Activated CD8-positive, alpha-beta memory T cell treated with anti-CD3 and anti-CD28 coated beads, Interleukin-2, amount 10 ng/mL, durations not matched to agents 7 days and 5 days (primary cell): ENCODE measurements at regions of chr3 and their contacts with region 1.

Region 1: DNA sequence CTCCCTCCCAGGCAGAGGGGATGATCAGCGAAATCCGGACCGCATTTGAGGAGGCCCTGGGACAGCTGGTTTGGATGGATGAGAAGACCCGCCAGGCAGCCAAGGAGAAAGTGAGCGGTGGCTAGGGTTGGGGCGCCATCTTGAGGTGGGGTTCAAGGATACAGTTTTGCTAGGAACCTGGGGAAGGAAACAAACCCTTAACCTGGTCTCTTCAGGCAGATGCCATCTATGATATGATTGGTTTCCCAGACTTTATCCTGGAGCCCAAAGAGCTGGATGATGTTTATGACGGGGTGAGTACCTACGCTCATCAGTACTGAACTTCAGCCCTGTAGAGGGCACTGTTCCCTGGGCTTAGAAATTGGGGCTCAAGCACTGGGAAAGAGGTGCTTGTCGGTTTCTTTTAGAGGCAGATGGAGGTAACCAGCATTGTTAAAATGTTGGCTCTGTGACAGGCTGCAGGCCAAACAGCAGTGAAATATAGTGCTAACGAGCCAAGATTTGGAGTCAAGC is 9.6 kb upstream of the PSMD2 start:
- DNase-seq: peak; percentile 76
- ATAC-seq: peak; percentile 80
- H3K4me3 Mint-ChIP-seq: no peak overlapping the region
- H3K27ac Mint-ChIP-seq: no peak overlapping the region
- H3K4me1 Mint-ChIP-seq: no peaks in the 10 kb centered on the region
- H3K27me3 Mint-ChIP-seq: peaks cover 14% of the 10 kb centered on the region

Region 2: DNA sequence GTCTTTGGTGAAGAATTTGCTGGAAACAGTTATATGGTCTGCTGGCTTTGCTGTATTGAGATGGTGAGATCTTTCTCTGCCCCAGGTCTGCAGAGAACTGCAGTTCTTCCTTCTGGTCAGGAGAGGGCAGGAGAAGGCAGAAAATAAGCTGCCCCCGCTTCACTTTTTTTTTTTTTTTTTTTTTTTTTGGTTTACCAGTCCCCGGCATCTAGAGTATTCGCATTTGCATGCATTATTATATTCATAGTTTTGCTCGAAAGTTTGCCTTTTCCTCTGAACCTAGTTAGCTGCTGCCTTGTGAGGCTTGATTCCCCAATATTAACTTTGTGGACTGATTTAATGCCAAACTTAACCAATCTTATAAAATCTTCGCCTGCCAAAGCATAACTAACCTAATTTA is 394.2 kb before region 1 on chr3:
- CTCF ChIA-PET with region 1: interaction called, 12 read pairs
- DNase-seq: peak; percentile 54
- ATAC-seq: peak; percentile 84
- H3K4me3 Mint-ChIP-seq: no peak overlapping the region
- H3K27ac Mint-ChIP-seq: no peak overlapping the region
- H3K4me1 Mint-ChIP-seq: peaks cover 3% of the 10 kb centered on the region
- H3K27me3 Mint-ChIP-seq: peaks cover 19% of the 10 kb centered on the region

Region 3: GRCh38 chr3:184040010-184040409 is 249.5 kb before region 1 on chr3:
- CTCF ChIA-PET with region 1: no interaction called
- DNase-seq: no peak
- ATAC-seq: no peak
- H3K4me3 Mint-ChIP-seq: no peak overlapping the region
- H3K27ac Mint-ChIP-seq: no peak overlapping the region
- H3K4me1 Mint-ChIP-seq: no peaks in the 10 kb centered on the region
- H3K27me3 Mint-ChIP-seq: peaks cover 5% of the 10 kb centered on the region

Region 4: DNA sequence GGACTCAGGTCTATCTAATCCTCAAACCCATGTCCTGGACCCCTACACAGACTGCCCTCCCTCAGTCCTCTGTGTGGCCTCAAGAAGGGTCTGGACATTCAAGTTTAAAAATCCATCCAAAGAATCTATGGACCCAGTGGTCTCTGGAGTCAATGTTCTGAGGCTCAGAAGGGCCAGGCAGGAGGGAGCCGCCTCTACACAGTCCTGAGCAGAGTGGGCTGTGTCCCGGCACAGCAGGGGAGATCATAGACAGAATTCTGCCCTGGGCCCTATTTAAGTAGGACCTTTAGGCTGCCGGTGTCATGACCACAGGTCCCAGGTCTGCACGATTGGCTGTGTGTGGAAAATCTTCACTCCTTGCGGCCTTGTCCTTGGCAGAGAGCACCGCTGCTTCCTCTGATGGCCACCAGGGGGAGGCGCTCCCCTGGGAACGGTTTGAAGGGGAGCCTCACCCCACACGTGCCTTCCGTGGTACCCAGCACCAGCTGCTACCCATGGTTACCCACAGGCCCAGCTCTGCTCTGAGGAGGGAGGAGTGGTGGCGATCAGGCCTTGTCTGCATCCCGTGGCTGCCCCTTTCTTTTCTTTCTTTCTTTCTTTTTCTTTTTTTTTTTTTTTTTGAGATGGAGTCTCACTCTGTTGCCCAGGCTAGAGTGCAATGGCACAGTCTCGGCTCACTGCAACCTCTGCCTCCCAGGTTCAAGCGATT is 128.3 kb after region 1 on chr3:
- CTCF ChIA-PET with region 1: no interaction called
- DNase-seq: peak; percentile 72
- ATAC-seq: peak; percentile 96
- H3K4me3 Mint-ChIP-seq: no peak overlapping the region
- H3K27ac Mint-ChIP-seq: no peak overlapping the region
- H3K4me1 Mint-ChIP-seq: peaks cover 2% of the 10 kb centered on the region
- H3K27me3 Mint-ChIP-seq: peaks cover 6% of the 10 kb centered on the region

Region 5: GRCh38 chr3:184496937-184497336 is 207.5 kb after region 1 on chr3:
- CTCF ChIA-PET with region 1: no interaction called
- DNase-seq: no peak
- ATAC-seq: no peak
- H3K4me3 Mint-ChIP-seq: no peak overlapping the region
- H3K27ac Mint-ChIP-seq: no peak overlapping the region
- H3K4me1 Mint-ChIP-seq: peaks cover 5% of the 10 kb centered on the region
- H3K27me3 Mint-ChIP-seq: peaks cover 44% of the 10 kb centered on the region